Caco-2 (cell line): ENCODE measurements at regions of chr5 and their contacts with region 1.

Region 1: DNA sequence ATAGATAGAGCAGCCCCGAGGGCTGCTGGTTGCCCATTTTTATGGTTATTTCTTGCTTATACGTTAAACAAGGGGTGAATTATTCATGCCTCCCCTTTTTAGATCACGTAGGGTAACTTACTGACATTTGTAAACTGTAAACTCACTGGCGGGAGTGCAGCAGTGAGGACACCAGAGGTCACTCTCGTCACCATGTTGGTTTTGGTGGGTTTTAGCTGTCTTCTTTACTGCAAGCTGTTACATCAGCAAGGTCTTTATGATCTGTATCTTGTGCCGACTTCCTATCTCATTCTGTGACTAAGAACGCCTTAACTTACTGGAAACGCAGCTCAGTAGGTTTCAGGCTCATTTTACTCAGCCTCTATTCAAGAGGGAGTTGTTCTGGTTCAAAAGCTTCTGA is 155.0 kb upstream of the PRDM9 start:
- DNase-seq: peak in 1 of 2 experiments; percentile 47
- H3K4me3 ChIP-seq: no peak overlapping the region
- H3K4me3 Mint-ChIP-seq: no peak overlapping the region
- H3K27ac Mint-ChIP-seq: no peak overlapping the region
- H3K4me1 ChIP-seq: no peaks in the 10 kb centered on the region
- H3K4me1 Mint-ChIP-seq: no peaks in the 10 kb centered on the region
- H3K27me3 ChIP-seq: no peaks in the 10 kb centered on the region
- H3K27me3 Mint-ChIP-seq: peaks cover 3% of the 10 kb centered on the region
- CTCF ChIP-seq: peak in 1 of 2 experiments; percentile 31

Region 2: DNA sequence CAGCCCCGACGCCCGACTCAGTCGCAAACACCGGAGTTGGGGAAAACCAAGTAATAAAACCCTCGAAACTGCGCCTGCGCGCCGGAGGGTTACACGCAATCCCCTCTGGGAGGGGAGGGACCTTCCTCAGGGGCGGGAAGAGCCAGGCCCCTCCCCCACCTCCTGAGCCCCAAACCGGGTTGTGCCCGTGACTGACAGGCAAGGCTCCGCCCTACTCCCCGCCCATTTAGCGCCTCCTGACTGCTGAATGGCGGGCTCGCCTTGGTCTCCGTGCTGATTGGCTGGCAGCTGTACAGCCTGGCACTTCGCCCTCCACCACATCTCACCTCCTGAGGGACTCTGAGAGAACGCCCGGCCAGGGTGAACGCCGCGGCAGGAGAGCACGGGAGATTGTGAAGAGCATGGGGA is 154.8 kb after region 1 on chr5 and contains the start of gene PRDM9:
- CTCF ChIA-PET with region 1: no interaction called
- POLR2A ChIA-PET with region 1: no interaction called
- intact Hi-C with region 1: loop called (anchors 2 kb)
- DNase-seq: no peak
- H3K4me3 ChIP-seq: no peak within 1 kb of the TSS
- H3K4me3 Mint-ChIP-seq: no peak within 1 kb of the TSS
- H3K27ac Mint-ChIP-seq: no peak within 1 kb of the TSS
- H3K4me1 ChIP-seq: no peaks in the 10 kb centered on the region
- H3K4me1 Mint-ChIP-seq: no peaks in the 10 kb centered on the region
- H3K27me3 ChIP-seq: no peaks in the 10 kb centered on the region
- H3K27me3 Mint-ChIP-seq: no peaks in the 10 kb centered on the region
- CTCF ChIP-seq: no peak
- total RNA-seq, gene PRDM9: not detected in 2 replicates

Region 3: GRCh38 chr5:23742701-23743100 is 390.3 kb after region 1 on chr5:
- CTCF ChIA-PET with region 1: no interaction called
- POLR2A ChIA-PET with region 1: no interaction called
- intact Hi-C with region 1: loop called (anchors 1 kb)
- DNase-seq: no peak
- H3K4me3 ChIP-seq: no peak overlapping the region
- H3K4me3 Mint-ChIP-seq: no peak overlapping the region
- H3K27ac Mint-ChIP-seq: no peak overlapping the region
- H3K4me1 ChIP-seq: no peaks in the 10 kb centered on the region
- H3K4me1 Mint-ChIP-seq: no peaks in the 10 kb centered on the region
- H3K27me3 ChIP-seq: no peaks in the 10 kb centered on the region
- H3K27me3 Mint-ChIP-seq: no peaks in the 10 kb centered on the region
- CTCF ChIP-seq: no peak

Region 4: DNA sequence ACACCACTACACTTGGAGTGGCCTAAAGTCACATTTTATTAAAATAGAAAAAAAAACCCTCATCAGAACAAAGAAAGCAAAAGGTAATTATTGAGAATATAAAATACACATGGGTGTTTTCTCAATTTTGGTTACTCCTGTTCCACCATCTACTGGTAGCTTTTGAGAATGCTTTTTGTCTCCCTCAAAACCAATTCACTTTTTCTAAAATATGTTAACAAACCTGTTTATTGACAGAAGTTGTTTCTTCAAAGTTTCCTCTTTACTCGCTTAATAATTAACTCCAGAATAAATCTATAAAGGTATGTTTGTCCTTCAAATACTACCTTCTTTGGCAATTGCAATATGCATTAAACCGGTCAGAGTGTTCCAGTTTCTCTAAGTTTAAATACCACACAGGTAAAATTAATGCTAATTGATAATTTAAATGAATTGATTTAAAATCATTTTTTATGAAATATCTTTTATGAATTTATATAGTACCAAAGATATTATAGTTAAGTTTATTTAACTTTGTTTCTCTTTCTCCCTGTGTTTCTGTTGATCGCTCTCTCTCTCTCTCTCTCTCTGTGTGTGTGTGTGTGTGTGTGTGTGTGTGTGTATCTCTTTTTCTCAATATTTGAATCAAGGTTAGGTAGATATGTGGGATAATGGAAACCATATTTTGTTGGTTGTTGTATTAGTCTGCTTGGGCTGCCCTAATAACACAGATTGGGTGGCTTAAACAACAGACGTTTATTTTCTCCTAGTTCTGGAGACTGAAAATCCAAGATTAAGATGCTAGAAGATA is 642.3 kb after region 1 on chr5:
- CTCF ChIA-PET with region 1: no interaction called
- POLR2A ChIA-PET with region 1: no interaction called
- intact Hi-C with region 1: loop called (anchors 10 kb)
- DNase-seq: peak in 1 of 2 experiments; percentile 20
- H3K4me3 ChIP-seq: no peak overlapping the region
- H3K4me3 Mint-ChIP-seq: no peak overlapping the region
- H3K27ac Mint-ChIP-seq: no peak overlapping the region
- H3K4me1 ChIP-seq: peaks cover 13% of the 10 kb centered on the region; the same call in 1 of the 2 replicates
- H3K4me1 Mint-ChIP-seq: peaks cover 7% of the 10 kb centered on the region
- H3K27me3 ChIP-seq: no peaks in the 10 kb centered on the region
- H3K27me3 Mint-ChIP-seq: no peaks in the 10 kb centered on the region
- CTCF ChIP-seq: peak; percentile 28 to 31